A549 (cell line): ENCODE measurements at regions of chr15 and their contacts with region 1.

Region 1: DNA sequence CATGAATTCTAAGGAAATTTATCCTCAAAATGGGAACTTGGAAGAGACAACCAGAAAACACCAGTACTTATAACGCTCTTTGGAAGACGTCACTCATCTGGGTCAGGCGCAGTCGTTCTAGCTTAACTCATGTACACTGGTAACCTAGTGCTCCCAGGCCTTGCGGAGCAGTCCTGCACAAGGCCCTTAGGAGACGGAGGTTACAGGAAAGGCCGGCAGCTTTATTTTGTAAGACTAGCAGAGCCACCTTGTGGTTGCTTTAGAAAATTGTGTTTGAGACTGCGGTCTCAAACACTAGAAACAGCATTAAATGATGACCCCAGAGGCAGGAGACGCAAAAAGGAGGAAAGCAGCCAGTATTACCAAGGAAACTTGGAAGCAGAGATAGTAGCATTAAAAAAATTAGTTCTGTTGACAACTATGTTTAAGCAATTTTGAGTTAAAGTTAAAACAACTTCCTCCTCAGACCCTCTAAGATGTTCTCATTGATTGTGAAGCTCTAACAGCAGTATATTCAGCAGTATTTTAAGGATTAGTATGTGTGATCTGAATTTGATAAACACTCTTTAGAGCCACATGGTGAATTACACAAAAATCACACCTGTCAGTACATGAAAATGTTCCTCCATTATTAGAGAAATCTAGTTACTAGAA is 141.9 kb upstream of the C2CD4B start:
- DNase-seq: peak; percentile 87 to 88
- ATAC-seq: peak; percentile 97 to 99
- H3K4me3 ChIP-seq: no peak overlapping the region
- H3K27ac ChIP-seq: no peak overlapping the region
- H3K4me1 ChIP-seq: no peaks in the 10 kb centered on the region
- CTCF ChIP-seq: peak; percentile 90
- EP300 ChIP-seq: no peak
- POLR2A ChIP-seq: no peak
- RAD21 ChIP-seq: peak; percentile 84 to 93

Region 2: DNA sequence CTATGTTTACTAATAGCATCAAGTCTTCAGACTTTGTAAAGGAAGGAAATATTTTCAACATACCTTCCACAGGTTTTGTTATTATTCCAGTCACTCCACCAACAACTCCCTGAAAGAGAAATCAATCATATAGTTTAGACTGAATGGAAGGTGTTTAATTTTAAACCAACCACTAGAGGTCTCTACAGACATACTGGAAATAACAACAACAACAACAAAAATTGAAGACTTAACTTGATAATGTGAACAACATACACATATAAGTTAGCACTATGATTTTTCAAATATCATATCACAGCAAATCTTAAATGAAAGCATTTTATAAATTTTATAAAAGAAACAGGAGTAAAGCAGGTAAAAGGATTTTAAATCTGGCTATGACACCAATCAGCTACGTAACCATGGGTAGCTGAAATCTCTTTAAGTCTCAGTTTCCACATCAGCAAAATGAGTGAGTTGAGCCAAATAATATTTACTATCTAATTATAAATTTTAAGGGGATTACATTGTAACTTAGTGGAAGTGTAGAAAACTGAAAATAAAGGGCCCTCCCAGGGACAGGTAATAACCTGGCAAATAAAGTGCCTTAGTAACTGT is 435.0 kb before region 1 on chr15:
- CTCF ChIA-PET with region 1: interaction called, 15 read pairs
- POLR2A ChIA-PET with region 1: no interaction called
- DNase-seq: peak; percentile 27 to 32
- ATAC-seq: peak; percentile 68 to 76; a peak in 4 of 6 replicates
- H3K4me3 ChIP-seq: no peak overlapping the region
- H3K27ac ChIP-seq: no peak overlapping the region
- H3K4me1 ChIP-seq: no peaks in the 10 kb centered on the region
- CTCF ChIP-seq: peak; percentile 91
- EP300 ChIP-seq: no peak
- POLR2A ChIP-seq: no peak
- RAD21 ChIP-seq: peak; percentile 76 to 78

Region 3: DNA sequence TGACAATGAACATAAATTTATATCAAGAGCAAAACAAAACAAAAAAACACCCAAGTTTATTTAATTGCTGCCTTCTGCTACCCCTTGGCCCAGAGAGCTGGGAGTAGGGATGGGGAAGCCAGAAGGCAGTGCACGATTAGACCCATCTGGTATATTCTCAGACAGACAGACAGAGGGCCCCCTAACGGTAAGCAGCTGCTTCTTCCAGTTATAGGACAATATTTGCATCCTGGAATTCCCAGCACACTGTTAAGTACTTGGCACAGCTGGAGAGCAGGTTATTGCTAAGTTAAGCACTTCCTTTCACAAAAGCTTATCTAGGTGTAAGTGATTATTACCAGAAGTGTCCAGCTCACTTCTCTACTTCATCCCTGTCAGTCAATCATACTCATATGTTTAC is 181.2 kb before region 1 on chr15:
- CTCF ChIA-PET with region 1: interaction called, 19 read pairs
- POLR2A ChIA-PET with region 1: no interaction called
- DNase-seq: peak in 1 of 2 experiments; percentile 74
- ATAC-seq: peak; percentile 77 to 87
- H3K4me3 ChIP-seq: no peak overlapping the region
- H3K27ac ChIP-seq: peak overlapping the region in 1 of 2 experiments; percentile 67; a peak in 2 of 6 replicates
- H3K4me1 ChIP-seq: peaks cover 24% of the 10 kb centered on the region
- CTCF ChIP-seq: peak; percentile 39
- EP300 ChIP-seq: no peak
- POLR2A ChIP-seq: no peak
- RAD21 ChIP-seq: peak in 1 of 2 experiments; percentile 26; a peak in 2 of 5 replicates

Region 4: DNA sequence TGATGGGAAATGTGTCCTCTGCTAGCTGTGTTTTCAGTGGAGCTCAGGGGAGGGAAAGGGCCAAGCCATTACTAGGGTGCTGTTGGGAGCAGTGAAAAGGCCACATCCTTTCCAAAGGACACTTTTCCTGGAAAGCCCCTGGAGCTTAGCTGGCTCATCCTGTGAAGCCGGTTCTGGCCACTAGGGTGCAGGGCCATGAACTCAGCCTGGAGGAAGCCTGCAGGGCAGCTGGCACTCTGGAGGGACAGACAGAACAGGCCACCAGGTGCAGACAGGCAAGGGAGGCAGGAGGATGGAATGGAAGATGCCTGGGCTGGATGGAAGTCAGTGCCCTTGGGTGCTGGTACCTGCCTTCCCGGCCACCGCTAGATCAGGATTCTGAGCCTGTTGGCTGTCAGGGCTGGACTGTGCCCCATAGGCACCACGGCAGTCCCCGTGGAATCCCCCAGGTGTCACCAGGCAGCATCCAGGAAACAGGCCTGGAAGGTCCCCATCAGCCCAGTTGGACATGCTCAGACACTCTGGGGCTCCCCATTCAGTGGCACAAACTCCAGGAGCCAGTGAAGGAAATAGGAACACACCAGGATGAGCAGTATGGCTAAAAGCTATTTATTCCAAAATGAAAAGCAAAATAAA is 65.7 kb before region 1 on chr15:
- CTCF ChIA-PET with region 1: interaction called, 28 read pairs
- POLR2A ChIA-PET with region 1: no interaction called
- DNase-seq: peak; percentile 46 to 60
- ATAC-seq: peak; percentile 85 to 91
- H3K4me3 ChIP-seq: no peak overlapping the region
- H3K27ac ChIP-seq: no peak overlapping the region
- H3K4me1 ChIP-seq: no peaks in the 10 kb centered on the region
- CTCF ChIP-seq: peak; percentile 28
- EP300 ChIP-seq: no peak
- POLR2A ChIP-seq: no peak
- RAD21 ChIP-seq: peak in 1 of 2 experiments; percentile 27; a peak in 3 of 5 replicates

Region 5: GRCh38 chr15:62287066-62287857 is 19.7 kb before region 1 on chr15:
- CTCF ChIA-PET with region 1: interaction called, 14 read pairs
- POLR2A ChIA-PET with region 1: no interaction called
- DNase-seq: no peak
- ATAC-seq: no peak
- H3K4me3 ChIP-seq: no peak overlapping the region
- H3K27ac ChIP-seq: no peak overlapping the region
- H3K4me1 ChIP-seq: 0 out of 3 replicates have a peak, but pooled peaks cover 4% of the 10 kb centered on the region
- CTCF ChIP-seq: no peak
- EP300 ChIP-seq: no peak
- POLR2A ChIP-seq: no peak
- RAD21 ChIP-seq: no peak

Region 6: DNA sequence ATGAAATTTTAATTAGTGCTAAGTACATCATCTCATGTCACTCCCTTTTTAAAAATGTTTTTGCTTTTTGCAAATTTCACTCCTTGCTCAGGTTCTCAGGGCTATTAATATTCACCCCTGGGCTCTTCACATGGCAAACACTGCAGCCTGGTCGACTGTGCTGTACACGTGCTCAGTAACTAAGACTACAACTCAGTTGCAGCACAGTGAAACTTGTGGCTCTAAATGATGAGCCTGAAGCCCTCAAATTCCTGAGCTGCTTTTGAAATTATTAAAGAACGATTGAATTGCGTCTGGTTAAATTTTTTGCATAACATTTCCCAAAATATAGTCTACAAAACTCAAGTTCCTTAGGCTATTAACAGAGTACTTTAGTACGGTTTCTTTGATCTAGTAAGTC is 17.4 kb after region 1 on chr15:
- CTCF ChIA-PET with region 1: interaction called, 43 read pairs
- POLR2A ChIA-PET with region 1: no interaction called
- DNase-seq: no peak
- ATAC-seq: no peak
- H3K4me3 ChIP-seq: no peak overlapping the region
- H3K27ac ChIP-seq: no peak overlapping the region
- H3K4me1 ChIP-seq: peaks cover 17% of the 10 kb centered on the region; the same call in 2 of the 3 replicates
- CTCF ChIP-seq: no peak
- EP300 ChIP-seq: no peak
- POLR2A ChIP-seq: no peak
- RAD21 ChIP-seq: no peak

Region 7: DNA sequence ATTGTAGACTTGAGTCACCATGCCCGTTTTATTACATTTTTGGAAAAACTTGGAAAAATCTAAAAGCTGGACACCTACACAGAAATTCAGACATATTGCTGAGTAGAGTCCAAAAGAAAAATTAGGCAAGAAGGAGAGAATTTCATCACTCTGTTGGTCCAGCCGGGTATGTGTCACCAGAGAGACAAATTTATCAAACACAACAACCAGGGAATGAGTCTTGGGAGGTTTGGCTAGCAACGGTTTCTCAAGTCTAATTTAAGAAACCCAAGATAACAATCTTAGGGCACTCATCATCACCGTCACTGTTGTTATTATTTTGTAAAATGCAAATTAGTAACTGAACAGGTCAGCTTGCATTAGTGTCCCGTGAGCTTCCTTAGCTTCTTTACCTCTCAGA is 55.6 kb after region 1 on chr15:
- CTCF ChIA-PET with region 1: no interaction called
- POLR2A ChIA-PET with region 1: no interaction called
- DNase-seq: no peak
- ATAC-seq: no peak
- H3K4me3 ChIP-seq: no peak overlapping the region
- H3K27ac ChIP-seq: no peak overlapping the region
- H3K4me1 ChIP-seq: no peaks in the 10 kb centered on the region
- CTCF ChIP-seq: no peak
- EP300 ChIP-seq: no peak
- POLR2A ChIP-seq: no peak
- RAD21 ChIP-seq: no peak

Region 8: GRCh38 chr15:62403164-62403809 is 96.3 kb after region 1 on chr15:
- CTCF ChIA-PET with region 1: no interaction called
- POLR2A ChIA-PET with region 1: no interaction called
- DNase-seq: peak in 1 of 2 experiments; percentile 15
- ATAC-seq: peak in 1 of 2 experiments; percentile 63; a peak in 2 of 6 replicates
- H3K4me3 ChIP-seq: no peak overlapping the region
- H3K27ac ChIP-seq: no peak overlapping the region
- H3K4me1 ChIP-seq: peaks cover 12% of the 10 kb centered on the region
- CTCF ChIP-seq: no peak
- EP300 ChIP-seq: no peak
- POLR2A ChIP-seq: no peak
- RAD21 ChIP-seq: no peak

Region 9: GRCh38 chr15:62506217-62506805 is 199.3 kb after region 1 on chr15:
- CTCF ChIA-PET with region 1: no interaction called
- POLR2A ChIA-PET with region 1: no interaction called
- DNase-seq: peak; percentile 57 to 85
- ATAC-seq: peak; percentile 83 to 94
- H3K4me3 ChIP-seq: no peak overlapping the region; the same call in 2 of the 3 replicates
- H3K27ac ChIP-seq: peak overlapping the region; percentile 62 to 80
- H3K4me1 ChIP-seq: peaks cover 55% of the 10 kb centered on the region
- CTCF ChIP-seq: no peak
- EP300 ChIP-seq: peak; percentile 53 to 70; a peak in 2 of 5 replicates
- POLR2A ChIP-seq: no peak
- RAD21 ChIP-seq: peak in 1 of 2 experiments; percentile 30; a peak in 1 of 5 replicates